ENCODE measurements at regions of chr3 and their contacts with region 1.

Region 1: DNA sequence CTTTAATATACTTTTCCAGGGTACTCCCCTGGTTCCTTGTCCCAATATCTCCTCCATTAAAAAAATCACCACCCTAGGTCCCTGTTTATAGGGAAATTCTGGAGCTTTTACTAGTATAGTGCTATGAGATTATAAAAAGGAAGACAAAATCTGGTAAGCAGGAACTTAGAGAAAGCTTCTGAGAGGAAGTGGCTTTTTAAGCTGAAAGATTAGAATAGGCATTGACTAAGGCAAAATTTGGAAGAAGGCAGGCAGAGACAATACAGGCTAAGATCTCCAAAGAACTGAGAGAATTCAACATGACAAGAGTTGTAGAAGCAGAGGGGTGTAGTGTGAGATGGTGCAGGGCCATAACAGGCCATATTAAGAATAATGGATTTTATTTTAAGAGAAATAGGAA is 25.8 kb downstream of the SGO1 start:
- DNase-seq: no peak
- ATAC-seq: peak; percentile 21
- H3K4me3 Mint-ChIP-seq: no peak overlapping the region
- H3K27ac Mint-ChIP-seq: peak overlapping the region; percentile 60
- H3K4me1 Mint-ChIP-seq: peaks cover 38% of the 10 kb centered on the region
- H3K27me3 Mint-ChIP-seq: no peaks in the 10 kb centered on the region
- CTCF ChIP-seq: no peak

Region 2: DNA sequence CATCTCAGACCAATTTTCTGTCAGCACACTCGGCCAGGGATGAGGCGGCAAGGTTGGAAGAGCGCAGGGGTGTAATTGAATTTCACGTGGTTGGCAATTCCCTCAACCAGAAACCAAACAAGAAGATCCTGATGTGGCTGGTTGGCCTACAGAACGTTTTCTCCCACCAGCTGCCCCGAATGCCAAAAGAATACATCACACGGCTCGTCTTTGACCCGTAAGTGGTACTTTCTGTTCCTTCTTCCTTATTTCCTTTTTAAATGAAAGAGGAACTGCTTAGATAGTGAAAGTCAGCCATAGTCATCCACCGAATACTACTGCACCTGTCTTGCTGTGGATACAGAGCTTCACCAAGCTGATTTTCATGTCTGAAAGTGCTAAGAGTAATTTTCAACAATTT is 34.3 kb before region 1 on chr3:
- CTCF ChIA-PET with region 1: no interaction called
- POLR2A ChIA-PET with region 1: interaction called, 4 read pairs
- intact Hi-C with region 1: loop called (anchors 2 kb)
- DNase-seq: peak; percentile 39
- ATAC-seq: peak; percentile 95
- H3K4me3 Mint-ChIP-seq: peak overlapping the region; percentile 58
- H3K27ac Mint-ChIP-seq: peak overlapping the region; percentile 87
- H3K4me1 Mint-ChIP-seq: peaks cover 38% of the 10 kb centered on the region
- H3K27me3 Mint-ChIP-seq: no peaks in the 10 kb centered on the region
- CTCF ChIP-seq: no peak

Region 3: DNA sequence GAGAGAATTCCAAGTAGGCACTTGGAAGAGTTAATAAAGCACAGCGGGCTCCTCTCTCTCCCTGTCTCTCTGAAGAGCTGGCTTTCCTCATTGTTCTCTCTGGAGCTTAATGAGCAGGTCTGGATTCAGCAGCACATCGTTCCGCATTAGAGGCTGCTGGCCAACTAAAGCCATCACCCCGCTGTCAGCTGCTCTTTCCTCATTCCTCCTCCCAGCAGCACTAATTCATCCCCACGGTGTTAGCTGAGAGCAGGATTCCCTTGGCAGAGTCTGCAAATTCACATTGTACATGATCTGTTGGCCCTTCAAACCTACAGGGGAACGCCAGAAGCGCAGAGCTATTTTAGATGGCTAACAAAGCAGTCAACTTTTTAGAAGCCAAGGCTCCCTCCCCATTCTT is 18.4 kb before region 1 on chr3:
- CTCF ChIA-PET with region 1: no interaction called
- POLR2A ChIA-PET with region 1: interaction called, 3 read pairs
- intact Hi-C with region 1: loop called (anchors 2 kb)
- DNase-seq: no peak
- ATAC-seq: no peak
- H3K4me3 Mint-ChIP-seq: no peak overlapping the region
- H3K27ac Mint-ChIP-seq: no peak overlapping the region
- H3K4me1 Mint-ChIP-seq: peaks cover 4% of the 10 kb centered on the region
- H3K27me3 Mint-ChIP-seq: no peaks in the 10 kb centered on the region
- CTCF ChIP-seq: no peak

Region 4: DNA sequence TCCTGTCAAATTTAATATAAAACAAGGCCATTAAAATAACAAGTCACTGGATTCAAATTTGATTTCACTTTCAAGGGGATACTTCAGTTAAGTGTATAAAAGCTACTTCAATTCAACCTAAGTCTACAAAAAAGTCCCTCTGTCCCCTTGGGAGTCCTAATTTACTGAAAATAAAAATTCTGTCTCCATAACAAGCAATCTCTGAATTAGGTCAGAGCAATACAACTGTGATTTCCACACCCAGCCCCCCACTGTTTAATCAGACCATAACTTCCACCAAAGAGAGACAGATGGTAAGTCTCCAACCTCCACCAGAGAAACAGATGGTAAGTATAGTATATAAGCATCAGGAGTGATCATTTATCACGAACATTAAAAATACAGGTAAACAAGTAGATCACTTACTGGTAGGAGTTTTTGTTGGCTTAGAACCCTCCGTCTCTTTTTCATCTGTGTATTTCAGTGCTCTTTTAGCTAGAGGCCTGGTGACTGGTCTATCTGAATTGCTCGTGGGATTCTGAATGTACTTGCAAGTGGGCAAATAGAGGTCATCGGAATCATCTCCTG is 13.7 kb after region 1 on chr3:
- CTCF ChIA-PET with region 1: no interaction called
- POLR2A ChIA-PET with region 1: no interaction called
- intact Hi-C with region 1: loop called (anchors 2 kb)
- DNase-seq: no peak
- ATAC-seq: peak; percentile 50
- H3K4me3 Mint-ChIP-seq: no peak overlapping the region
- H3K27ac Mint-ChIP-seq: no peak overlapping the region
- H3K4me1 Mint-ChIP-seq: peaks cover 13% of the 10 kb centered on the region
- H3K27me3 Mint-ChIP-seq: no peaks in the 10 kb centered on the region
- CTCF ChIP-seq: no peak

Region 5: DNA sequence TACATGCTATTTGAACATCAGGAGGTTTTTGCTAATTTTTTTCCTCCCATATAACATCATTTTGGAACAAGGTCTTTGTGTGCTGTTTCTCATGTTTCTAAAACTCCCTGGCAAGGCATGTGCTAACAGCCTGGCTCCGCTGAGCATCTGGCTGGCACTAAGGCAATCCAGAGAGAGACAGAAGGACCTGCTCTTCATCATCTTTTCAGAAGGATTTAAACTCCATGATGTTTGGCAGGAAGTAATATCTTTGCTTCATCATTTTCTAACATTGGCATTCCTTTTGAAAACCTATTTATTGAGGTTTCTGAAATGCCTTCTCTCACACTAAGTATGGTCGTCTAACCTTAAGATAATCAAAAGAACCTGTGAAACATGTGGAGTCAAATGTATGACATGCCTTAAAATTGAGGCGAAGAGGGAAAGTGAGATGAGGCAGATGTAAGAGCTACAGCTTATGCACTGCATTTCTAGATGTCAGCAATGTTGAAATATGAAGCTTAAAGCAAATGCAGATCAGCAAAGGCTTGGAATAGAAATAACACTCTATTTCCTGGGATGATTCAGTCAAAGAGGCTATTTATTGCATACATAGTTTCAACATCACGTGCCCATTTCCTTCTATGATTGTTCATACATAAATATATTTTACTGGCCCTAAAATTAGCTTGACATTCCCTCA is 998.8 kb after region 1 on chr3:
- CTCF ChIA-PET with region 1: no interaction called
- POLR2A ChIA-PET with region 1: no interaction called
- intact Hi-C with region 1: no loop called
- DNase-seq: no peak
- ATAC-seq: no peak
- H3K4me3 Mint-ChIP-seq: no peak overlapping the region
- H3K27ac Mint-ChIP-seq: no peak overlapping the region
- H3K4me1 Mint-ChIP-seq: no peaks in the 10 kb centered on the region
- H3K27me3 Mint-ChIP-seq: no peaks in the 10 kb centered on the region
- CTCF ChIP-seq: no peak